ENCODE measurements at regions of chr3 and their contacts with region 1.

Region 1: DNA sequence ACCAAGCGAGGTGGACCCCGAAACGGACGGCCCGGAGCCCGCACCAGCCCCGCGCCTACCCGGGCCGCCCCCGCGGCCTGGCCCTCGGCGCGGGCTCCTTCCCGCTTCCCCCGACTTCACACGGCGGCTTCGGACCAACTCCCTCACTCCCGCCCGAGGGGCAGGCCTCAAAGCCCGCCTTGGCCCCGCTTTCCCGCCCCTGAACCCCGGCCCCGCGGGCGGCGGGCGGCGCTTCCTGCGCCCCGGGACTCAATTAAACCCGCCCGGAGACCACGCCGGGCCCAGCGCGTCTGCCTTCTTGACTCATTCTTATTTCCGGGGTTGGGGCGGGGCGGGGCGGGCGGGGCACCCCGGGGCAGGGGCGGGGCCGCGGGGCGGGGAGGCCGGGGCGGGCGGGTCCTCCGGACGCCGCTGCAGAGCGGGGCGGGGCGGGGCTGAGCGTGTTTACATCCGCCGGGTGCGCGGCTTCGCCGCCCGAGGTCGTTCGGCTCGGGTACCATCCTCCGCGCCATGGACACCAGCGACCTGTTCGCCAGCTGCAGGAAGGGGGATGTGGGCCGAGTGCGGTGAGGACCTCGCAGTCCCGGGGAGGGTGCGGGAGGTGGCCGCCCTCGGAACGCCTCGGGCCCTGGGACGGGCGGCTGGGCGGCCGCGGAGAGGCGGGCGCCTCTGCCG is at the start of gene ABTB1:
- DNase-seq: peak; percentile 69

Region 2: GRCh38 chr3:127598841-127599570 is 73.6 kb before region 1 on chr3:
- in situ Hi-C with region 1: no loop called
- DNase-seq: no peak

Region 3: GRCh38 chr3:127970966-127971592 is 298.4 kb after region 1 on chr3:
- in situ Hi-C with region 1: loop called (anchors 25 kb)
- DNase-seq: peak; percentile 53

Measured in ACHN (cell line).